ENCODE measurements at regions of chr1 and their contacts with region 1.

Region 1: DNA sequence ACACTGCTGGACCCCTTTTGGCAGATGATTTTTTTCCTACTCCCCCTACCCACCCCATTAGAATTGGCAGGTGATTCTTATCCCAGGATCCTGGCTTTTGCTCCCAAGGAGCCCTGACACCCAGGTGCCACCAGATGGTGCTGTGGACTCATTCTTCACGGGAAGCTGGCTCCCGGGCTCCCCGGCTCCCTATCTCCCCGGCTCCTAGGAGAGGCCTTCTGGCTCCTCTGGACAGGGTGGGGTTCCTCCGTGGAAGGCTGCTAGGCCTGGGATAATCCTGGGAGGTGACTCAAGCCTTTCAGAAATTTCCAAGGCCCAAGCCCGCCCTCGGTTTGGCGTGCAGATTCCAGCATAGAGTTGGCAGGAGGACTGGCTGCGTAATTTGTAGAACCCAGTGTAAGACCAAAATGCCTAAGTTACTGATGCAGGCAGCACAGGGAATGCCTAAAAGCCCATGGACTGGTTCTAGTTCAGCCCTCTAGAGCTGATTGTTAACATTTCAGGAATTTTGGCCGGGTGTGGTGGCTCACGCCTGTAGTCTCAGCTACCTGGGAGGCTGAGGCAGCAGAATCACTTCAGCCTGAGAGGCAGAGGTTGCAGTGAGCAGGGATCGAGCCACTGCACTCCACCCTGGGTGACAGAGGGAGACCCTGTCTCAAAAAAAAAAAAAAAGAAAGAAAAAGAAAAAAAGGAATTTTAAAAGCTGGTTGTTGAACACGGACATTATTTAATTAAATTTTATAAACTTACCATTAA is 6.8 kb upstream of the BSDC1 start:
- DNase-seq: peak; percentile 65
- CTCF ChIP-seq: peak; percentile 88

Region 2: DNA sequence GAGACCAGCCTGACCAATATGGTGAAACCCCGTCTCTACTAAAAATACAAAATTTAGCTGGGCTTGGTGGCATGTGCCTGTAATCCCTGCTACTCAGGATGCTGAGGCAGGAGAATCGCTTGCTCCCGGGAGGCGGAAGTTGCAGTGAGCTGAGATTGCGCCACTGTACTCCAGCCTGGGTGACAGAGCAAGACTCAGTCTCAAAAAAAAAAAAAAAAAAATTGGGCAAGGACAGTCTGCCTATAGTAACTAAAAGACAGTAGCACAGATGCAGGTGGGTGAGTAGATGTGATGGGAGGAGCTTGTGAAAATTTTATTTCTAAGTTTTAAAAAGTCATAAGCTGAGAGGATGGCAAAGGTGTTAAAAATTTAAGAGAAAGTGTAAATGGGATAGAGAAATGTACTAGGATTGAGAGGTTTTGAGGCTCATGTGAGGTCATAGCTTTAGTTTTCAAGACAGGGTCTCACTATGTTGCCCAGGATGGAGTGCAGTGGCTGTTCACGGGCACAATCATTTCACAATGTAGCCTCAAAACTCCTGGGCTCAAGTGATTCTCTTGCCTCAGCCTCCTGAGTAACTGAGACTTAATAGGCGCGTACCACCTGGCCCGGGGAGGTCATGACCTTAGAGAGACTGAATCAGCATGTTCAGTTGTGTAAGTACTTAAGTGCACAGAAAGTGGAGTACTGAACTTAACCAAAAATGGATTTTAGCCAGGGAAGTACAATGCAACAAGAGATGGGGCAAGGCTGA is 496.5 kb before region 1 on chr1:
- in situ Hi-C with region 1: no loop called
- DNase-seq: no peak
- CTCF ChIP-seq: no peak

Region 3: DNA sequence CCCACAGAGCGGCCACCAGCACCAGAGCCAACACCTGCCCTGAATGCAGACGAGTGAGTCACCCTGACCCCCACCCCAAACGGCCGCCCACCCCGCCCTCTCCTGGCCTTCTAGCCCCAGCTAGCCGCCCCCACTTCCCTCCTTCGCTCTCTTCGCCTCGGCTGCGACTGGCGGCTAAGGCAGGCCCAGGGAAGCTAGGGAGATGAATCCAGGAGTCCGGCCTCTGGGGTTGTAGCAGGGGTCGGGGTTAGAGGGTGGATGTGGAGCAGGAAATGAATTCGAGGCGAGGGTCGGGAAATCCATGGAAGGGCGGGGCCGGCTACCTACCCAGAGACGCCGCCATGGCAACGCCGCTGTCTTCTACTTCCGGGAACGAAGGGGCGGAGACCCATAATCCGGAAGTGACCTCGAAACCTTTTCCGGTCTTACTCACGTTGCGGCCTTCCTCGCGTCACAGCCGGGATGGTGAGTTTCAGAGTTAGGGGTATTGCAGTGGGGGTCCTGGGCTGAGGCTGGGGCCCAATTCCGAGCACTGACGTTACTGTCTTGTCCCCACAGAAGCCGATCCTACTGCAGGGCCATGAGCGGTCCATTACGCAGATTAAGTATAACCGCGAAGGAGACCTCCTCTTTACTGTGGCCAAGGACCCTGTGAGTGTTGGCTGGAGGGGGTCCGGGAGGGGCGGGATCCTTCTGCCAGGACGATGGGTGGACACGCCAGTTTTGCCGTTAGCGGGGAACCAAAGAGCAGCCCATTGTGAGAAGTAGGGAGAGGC is 178.9 kb before region 1 on chr1 and contains the starts of genes EIF3I and TMEM234:
- in situ Hi-C with region 1: loop called (anchors 25 kb)
- DNase-seq: peak; percentile 94
- CTCF ChIP-seq: no peak

Measured in GM13977 (cell line).